ENCODE measurements at regions of chr10 and their contacts with region 1.

Region 1: GRCh38 chr10:91838199-91838598 is 40.0 kb downstream of the TNKS2 start:
- DNase-seq: no peak
- ATAC-seq: no peak
- H3K4me3 ChIP-seq: no peak overlapping the region
- H3K4me3 Mint-ChIP-seq: no peak overlapping the region
- H3K27ac ChIP-seq: no peak overlapping the region
- H3K27ac Mint-ChIP-seq: no peak overlapping the region
- H3K4me1 ChIP-seq: no peaks in the 10 kb centered on the region
- H3K4me1 Mint-ChIP-seq: no peaks in the 10 kb centered on the region
- H3K27me3 ChIP-seq: no peaks in the 10 kb centered on the region
- H3K27me3 Mint-ChIP-seq: no peaks in the 10 kb centered on the region
- CTCF ChIP-seq: no peak

Region 2: DNA sequence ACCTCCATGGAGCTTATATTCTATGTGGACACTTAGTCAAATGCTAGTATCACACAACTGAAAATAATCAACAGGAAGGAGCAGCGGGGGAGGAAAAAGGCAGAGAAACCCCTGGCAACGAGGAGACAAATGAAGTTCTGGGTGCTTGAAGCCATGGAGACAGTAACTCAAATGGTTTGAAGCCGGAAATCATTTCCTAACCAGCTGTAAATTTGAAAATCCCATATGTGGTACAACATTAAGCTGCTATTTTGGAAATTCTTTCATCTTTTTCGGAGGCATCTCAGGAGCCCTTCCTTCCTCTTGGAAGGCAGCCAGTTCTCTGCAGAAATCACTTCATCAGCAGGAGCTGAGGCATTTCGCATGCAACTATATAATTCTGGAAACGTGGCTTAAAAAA is 296.7 kb before region 1 on chr10:
- CTCF ChIA-PET with region 1: no interaction called
- POLR2A ChIA-PET with region 1: no interaction called
- intact Hi-C with region 1: no loop called
- DNase-seq: no peak
- ATAC-seq: no peak
- H3K4me3 ChIP-seq: no peak overlapping the region
- H3K4me3 Mint-ChIP-seq: no peak overlapping the region
- H3K27ac ChIP-seq: no peak overlapping the region
- H3K27ac Mint-ChIP-seq: no peak overlapping the region
- H3K4me1 ChIP-seq: no peaks in the 10 kb centered on the region
- H3K4me1 Mint-ChIP-seq: no peaks in the 10 kb centered on the region
- H3K27me3 ChIP-seq: peaks cover 0 to 6% of the 10 kb centered on the region in 2 experiments
- H3K27me3 Mint-ChIP-seq: peaks cover 5% of the 10 kb centered on the region
- CTCF ChIP-seq: no peak

Region 3: DNA sequence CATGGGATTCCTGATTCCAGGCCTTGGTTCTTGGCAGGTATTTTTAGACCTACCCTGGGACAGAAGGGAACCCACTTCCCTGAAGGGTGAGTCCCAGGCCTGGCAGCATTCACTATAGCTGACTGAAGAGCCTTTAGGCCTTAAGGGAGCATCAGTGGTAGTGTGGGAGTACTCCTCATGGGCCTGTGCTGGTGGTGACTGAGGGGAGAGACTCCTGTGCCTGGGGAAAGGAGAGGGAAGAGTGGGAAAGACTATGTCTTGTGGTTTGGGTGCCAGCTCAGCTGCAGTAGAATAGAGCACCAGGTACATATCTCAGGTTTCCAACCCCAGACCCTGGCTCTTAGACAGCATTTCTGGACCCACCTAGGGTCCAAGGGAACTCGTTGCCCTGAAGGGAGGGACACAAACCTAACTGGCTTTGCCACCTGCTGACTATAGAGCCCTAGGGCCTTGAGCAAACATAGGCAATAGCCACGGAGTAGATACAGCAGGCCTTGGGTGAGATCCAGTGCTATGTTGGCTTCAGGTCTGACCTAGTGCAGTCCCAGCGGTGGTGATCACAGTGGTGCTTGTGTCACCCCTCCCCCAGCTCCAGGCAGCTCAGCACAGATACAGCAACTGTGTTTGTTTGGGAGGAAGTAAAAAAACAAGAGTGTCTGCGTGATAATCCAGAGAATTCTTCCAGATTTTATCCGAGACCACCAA is 49.8 kb before region 1 on chr10:
- CTCF ChIA-PET with region 1: no interaction called
- POLR2A ChIA-PET with region 1: no interaction called
- intact Hi-C with region 1: no loop called
- DNase-seq: no peak
- ATAC-seq: no peak
- H3K4me3 ChIP-seq: no peak overlapping the region
- H3K4me3 Mint-ChIP-seq: no peak overlapping the region
- H3K27ac ChIP-seq: no peak overlapping the region
- H3K27ac Mint-ChIP-seq: no peak overlapping the region
- H3K4me1 ChIP-seq: no peaks in the 10 kb centered on the region
- H3K4me1 Mint-ChIP-seq: no peaks in the 10 kb centered on the region
- H3K27me3 ChIP-seq: no peaks in the 10 kb centered on the region
- H3K27me3 Mint-ChIP-seq: no peaks in the 10 kb centered on the region
- CTCF ChIP-seq: no peak

Region 4: DNA sequence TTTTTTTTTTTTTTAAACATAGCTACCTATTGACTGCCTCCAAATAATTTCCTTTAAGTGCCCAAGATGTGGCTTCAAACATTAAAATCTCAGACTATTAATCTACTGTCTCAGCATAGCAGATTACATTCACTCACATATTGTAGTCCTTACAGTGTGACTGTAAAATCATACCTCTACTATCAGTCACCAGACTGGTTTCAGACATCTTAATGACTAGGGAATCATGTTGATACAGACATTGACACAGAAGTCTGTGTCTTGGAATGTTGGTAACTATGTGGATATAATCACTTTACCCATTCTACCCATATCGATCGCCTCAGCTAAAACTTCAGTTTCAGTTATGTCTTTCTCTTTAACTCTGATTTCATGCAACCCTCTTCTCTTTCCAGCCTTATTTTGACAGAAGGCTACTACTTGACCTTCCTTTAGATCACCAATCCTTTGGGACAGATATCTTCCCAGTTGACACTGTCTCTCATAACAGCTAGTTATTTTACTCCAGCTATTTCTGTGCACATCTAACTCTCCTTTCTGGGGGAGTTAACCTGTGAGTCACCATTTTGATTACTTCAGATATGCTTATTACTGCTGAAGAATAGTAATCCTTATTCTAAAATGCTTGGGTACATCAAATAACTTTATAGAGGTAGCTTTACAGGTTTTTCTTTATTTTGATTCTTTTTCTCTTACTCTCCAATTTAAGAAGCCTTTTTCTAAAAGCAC is 32.9 kb before region 1 on chr10:
- CTCF ChIA-PET with region 1: no interaction called
- POLR2A ChIA-PET with region 1: no interaction called
- intact Hi-C with region 1: no loop called
- DNase-seq: no peak
- ATAC-seq: no peak
- H3K4me3 ChIP-seq: no peak overlapping the region
- H3K4me3 Mint-ChIP-seq: no peak overlapping the region
- H3K27ac ChIP-seq: no peak overlapping the region
- H3K27ac Mint-ChIP-seq: peak overlapping the region; percentile 0
- H3K4me1 ChIP-seq: peaks cover 14% of the 10 kb centered on the region
- H3K4me1 Mint-ChIP-seq: peaks cover 81% of the 10 kb centered on the region
- H3K27me3 ChIP-seq: no peaks in the 10 kb centered on the region
- H3K27me3 Mint-ChIP-seq: no peaks in the 10 kb centered on the region
- CTCF ChIP-seq: no peak

Region 5: GRCh38 chr10:91969297-91969696 is 131.1 kb after region 1 on chr10:
- CTCF ChIA-PET with region 1: no interaction called
- POLR2A ChIA-PET with region 1: no interaction called
- intact Hi-C with region 1: loop called in 1 of 2 experiments (anchors 10 kb)
- DNase-seq: no peak
- ATAC-seq: no peak
- H3K4me3 ChIP-seq: no peak overlapping the region
- H3K4me3 Mint-ChIP-seq: no peak overlapping the region
- H3K27ac ChIP-seq: no peak overlapping the region
- H3K27ac Mint-ChIP-seq: no peak overlapping the region
- H3K4me1 ChIP-seq: no peaks in the 10 kb centered on the region
- H3K4me1 Mint-ChIP-seq: no peaks in the 10 kb centered on the region
- H3K27me3 ChIP-seq: no peaks in the 10 kb centered on the region
- H3K27me3 Mint-ChIP-seq: no peaks in the 10 kb centered on the region
- CTCF ChIP-seq: no peak

Region 6: DNA sequence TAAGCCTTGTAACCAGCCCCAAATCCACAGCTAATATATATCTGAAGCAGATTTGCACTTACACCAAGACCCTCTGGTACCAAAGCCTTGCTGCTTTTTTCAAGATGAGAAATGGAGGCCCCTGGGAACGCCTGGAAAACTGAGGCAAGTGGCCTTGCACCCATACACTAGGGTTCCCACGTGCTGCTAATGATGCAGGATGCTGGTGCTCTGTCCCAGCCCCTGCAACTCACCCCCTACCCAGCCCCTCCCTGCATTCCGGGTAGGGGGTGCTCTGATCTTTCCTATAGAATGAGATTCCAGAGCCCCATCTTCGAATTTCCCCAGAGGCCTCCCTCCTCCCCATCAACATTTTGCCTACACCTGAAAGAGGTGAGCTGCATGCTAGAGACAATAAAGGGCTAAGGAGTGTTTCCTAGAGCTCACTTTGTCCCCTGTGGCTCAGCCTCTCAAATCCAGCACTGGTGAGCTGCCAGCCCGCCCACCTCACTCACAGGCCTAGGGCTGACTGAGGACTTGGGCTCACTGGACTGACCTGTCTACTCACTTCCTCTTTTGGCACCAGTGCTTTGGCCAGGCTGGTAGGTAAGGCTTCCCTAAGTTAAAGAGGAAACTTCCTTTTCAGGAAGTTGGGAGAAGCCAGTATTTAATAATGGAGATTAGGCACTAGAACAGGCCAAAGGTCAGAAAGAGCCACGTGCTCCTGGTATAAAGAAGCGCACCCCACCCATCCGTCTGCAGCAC is 1753.0 kb after region 1 on chr10:
- CTCF ChIA-PET with region 1: no interaction called
- POLR2A ChIA-PET with region 1: no interaction called
- intact Hi-C with region 1: no loop called
- DNase-seq: no peak
- ATAC-seq: no peak
- H3K4me3 ChIP-seq: no peak overlapping the region
- H3K4me3 Mint-ChIP-seq: no peak overlapping the region
- H3K27ac ChIP-seq: no peak overlapping the region
- H3K27ac Mint-ChIP-seq: no peak overlapping the region
- H3K4me1 ChIP-seq: no peaks in the 10 kb centered on the region
- H3K4me1 Mint-ChIP-seq: no peaks in the 10 kb centered on the region
- H3K27me3 ChIP-seq: peaks cover 0 to 2% of the 10 kb centered on the region in 2 experiments
- H3K27me3 Mint-ChIP-seq: peaks cover 3% of the 10 kb centered on the region
- CTCF ChIP-seq: no peak